Ascending aorta (tissue), 2 donors: ENCODE measurements at regions of chr2 and their contacts with region 1.

Region 1: DNA sequence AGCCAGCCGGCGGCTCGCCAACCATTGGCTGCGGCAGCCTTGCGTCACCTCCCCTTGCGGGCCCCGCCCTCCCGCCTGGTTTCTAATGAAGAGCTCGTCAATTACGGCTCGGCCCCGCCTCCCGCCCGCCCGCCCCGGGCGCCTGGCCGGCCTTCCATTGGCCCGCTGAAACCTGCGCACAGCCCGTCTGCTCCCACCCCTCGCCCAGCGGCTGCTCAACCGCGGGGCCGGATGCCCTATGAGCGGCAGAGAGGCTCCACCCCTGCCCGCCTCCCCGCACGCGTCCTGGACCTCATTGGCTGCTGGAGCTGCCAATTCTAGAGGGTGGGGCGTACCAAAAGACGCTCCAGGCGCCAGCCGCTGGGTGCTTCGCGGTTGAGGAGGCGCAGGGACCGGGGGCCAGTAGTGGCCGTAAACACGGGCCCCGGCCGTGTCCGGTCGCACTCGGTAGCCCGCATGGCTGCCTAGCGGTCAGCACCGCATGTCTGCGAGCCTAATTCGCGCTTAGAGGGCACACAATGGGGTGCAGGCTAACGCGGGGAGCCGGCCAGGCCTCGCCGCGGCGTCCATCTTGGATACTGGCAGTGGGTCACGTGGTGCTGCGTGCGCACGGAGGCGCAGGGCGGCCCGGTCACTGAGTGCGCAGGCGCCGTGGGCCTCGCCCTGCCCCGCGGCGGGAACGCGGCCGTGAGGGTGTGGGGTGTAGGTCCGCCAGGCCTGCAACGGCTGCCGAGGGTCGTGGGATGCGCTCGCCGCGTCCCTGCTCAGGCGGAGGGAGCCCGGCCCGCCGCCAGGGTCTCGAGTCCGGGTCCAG is 454 bp upstream of the HDAC4 start:
- DNase-seq: peak; percentile 98 to 100
- H3K4me3 ChIP-seq: peak overlapping the region; percentile 69 to 85
- H3K27ac ChIP-seq: peak overlapping the region; percentile 98 to 100
- H3K4me1 ChIP-seq: peaks cover 0 to 23% of the 10 kb centered on the region in 2 donors
- H3K27me3 ChIP-seq: no peaks in the 10 kb centered on the region
- CTCF ChIP-seq: peak in 1 of 3 experiments; percentile 0

Region 2: DNA sequence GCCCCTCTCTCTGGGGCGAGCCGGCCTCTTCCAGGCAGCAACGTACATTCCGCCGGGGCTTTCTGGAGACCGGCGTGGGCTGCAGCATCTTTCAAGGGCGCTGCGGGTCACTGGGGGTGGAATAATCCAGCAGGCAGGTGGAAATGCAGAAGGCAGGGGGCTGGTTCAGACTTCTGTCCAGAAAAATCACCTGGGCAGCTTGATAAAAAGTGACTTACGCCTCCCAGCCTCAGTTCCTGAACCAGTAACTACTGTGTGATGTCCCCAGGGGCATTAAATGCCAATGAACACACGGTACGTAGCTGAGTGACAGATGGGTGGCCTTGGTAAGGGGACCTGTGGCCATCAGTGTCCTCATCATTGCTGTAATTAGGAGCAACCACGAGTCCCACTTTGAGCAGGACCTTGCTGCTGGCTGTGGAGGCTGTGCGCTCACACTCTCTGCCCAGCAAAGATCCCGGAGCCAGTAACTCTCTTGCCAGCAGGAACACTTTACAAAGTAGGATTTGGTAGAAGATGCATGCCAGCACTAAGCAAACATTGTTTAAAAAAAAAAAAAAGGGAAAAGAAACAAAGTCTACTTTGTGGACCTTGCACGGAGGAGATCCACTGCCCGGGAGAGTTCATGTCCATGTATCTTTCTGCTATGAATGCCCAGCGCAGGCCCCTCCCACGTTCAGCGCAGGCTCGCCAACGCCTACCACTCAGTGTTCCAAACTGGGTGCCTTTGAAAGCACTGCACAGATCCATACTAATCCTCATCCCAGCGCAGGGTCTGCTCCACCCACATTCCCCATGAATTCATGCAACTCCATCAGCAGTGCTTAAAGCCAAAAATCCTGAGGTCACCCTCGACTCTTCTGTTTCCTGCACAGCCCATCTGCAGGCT is 177.7 kb before region 1 on chr2:
- intact Hi-C with region 1: loop called (anchors 2 kb)
- DNase-seq: peak in 1 of 2 donors; percentile 87
- H3K4me3 ChIP-seq: peak overlapping the region in 1 of 2 donors; percentile 55
- H3K27ac ChIP-seq: peak overlapping the region; percentile 83 to 96
- H3K4me1 ChIP-seq: peaks cover 24 to 60% of the 10 kb centered on the region in 2 donors
- H3K27me3 ChIP-seq: no peaks in the 10 kb centered on the region
- CTCF ChIP-seq: no peak

Region 3: GRCh38 chr2:239326831-239327535 is 74.3 kb before region 1 on chr2:
- intact Hi-C with region 1: loop called (anchors 2 kb)
- DNase-seq: peak in 1 of 2 donors; percentile 57
- H3K4me3 ChIP-seq: no peak overlapping the region
- H3K27ac ChIP-seq: peak overlapping the region; percentile 78 to 86
- H3K4me1 ChIP-seq: peaks cover 17 to 38% of the 10 kb centered on the region in 2 donors
- H3K27me3 ChIP-seq: no peaks in the 10 kb centered on the region
- CTCF ChIP-seq: no peak

Region 4: DNA sequence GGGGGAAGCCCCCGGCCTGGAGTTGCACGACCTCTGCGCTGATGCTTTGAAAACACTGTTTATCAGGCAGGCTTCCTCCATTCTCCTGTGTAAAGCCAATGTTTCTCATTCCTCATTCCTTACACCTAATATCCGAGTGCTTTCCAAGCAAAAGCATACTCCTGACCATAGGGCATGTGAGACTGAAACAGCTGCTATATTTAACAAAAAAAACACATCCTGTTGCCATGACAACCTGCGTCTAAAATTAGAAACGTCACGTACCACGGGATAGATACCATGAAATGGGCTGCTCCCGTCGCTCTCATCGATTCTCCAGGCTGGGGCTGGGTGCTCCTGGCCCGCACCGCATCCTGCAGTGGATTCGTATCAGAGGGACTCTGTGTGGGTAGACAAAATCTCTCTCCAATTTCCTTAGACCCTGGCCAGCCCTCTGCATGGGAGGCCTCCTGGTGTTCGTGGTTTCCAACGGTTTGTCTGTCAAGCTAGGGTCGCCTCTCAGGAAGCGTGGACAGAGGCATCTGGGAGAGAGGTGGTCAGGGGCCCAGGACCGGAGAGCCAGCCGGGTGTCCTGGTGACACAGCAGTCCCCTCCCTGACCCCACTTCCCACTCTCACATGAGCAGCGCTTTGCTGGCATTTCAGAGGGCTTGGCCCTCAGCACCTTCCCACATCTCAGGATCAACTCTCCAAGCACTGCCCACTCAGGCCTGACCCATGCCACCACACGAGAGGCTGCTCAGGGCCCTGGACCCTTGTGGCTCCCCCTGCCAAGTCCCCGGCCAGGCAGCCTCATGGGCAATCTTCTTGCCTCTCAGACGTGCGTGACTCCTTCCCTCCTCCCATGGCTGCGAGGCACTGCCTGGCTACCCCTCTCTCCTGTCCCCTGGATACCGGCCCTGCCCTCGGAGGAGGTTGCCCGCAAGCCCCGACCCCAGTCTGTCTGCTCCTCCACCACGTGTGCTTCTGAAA is 355.8 kb after region 1 on chr2:
- intact Hi-C with region 1: loop called (anchors 2 kb)
- DNase-seq: peak in 1 of 2 donors; percentile 81
- H3K4me3 ChIP-seq: no peak overlapping the region
- H3K27ac ChIP-seq: peak overlapping the region; percentile 89 to 93
- H3K4me1 ChIP-seq: peaks cover 15 to 42% of the 10 kb centered on the region in 2 donors
- H3K27me3 ChIP-seq: no peaks in the 10 kb centered on the region
- CTCF ChIP-seq: no peak

Region 5: DNA sequence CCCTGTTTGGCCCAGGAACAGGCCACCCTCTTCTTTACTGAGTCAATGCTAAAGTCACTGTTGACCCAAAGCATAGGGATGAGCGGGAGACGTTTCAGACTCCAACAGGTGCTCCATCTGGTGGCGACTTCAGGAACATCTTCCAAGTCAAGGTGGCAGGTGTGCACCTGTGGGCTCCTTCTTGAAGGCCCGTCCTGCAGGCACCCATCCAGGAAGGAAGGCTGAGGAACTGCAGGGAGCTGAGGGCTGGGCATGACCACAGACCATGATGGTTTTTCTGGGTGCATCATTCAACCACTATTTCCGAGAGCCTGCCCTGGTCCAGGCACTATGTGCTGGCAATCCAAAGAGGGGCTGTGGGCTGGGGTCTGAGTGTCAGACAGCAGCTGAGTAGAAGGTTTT is 481.1 kb after region 1 on chr2:
- intact Hi-C with region 1: loop called (anchors 1 kb)
- DNase-seq: peak in 1 of 2 donors; percentile 75
- H3K4me3 ChIP-seq: no peak overlapping the region
- H3K27ac ChIP-seq: peak overlapping the region; percentile 75 to 86
- H3K4me1 ChIP-seq: peaks cover 4 to 14% of the 10 kb centered on the region in 2 donors
- H3K27me3 ChIP-seq: no peaks in the 10 kb centered on the region
- CTCF ChIP-seq: peak; percentile 70 to 79 (median 71)

Region 6: GRCh38 chr2:240434728-240435456 is 1033.6 kb after region 1 on chr2:
- intact Hi-C with region 1: loop called (anchors 5 kb)
- DNase-seq: peak; percentile 53 to 95
- H3K4me3 ChIP-seq: peak overlapping the region; percentile 98
- H3K27ac ChIP-seq: peak overlapping the region; percentile 92 to 98
- H3K4me1 ChIP-seq: peaks cover 23 to 28% of the 10 kb centered on the region in 2 donors
- H3K27me3 ChIP-seq: no peaks in the 10 kb centered on the region
- CTCF ChIP-seq: no peak